HepG2 (cell line): ENCODE measurements at regions of chrX and their contacts with region 1.

Region 1: DNA sequence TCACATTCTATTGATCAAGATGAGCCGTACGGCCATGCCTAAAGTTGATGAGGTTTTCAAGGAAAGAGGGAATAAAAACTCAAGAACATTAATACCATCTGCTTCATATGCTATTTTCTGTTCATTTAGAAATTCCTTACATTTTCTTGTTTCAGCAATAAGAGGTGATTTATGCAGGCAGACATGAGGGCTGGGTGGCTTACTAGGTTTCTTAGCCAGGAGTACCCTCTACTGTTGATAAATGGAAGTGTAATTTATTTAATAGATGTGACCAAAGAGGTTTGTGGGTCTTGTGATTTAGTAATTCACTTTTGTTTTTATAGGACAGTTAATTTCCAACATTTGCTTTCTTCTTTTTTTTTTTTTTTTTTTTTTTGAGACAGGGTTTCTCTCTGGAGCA is 6.4 kb upstream of the SMIM9 start:
- DNase-seq: peak; percentile 16
- ATAC-seq: no peak
- H3K4me3 ChIP-seq: no peak overlapping the region
- H3K27ac ChIP-seq: no peak overlapping the region
- H3K4me1 ChIP-seq: no peaks in the 10 kb centered on the region
- H3K27me3 ChIP-seq: no peaks in the 10 kb centered on the region
- CTCF ChIP-seq: peak; percentile 61
- EP300 ChIP-seq: no peak
- POLR2A ChIP-seq: no peak
- RAD21 ChIP-seq: peak; percentile 41; the same call in 1 of the 2 replicates

Region 2: DNA sequence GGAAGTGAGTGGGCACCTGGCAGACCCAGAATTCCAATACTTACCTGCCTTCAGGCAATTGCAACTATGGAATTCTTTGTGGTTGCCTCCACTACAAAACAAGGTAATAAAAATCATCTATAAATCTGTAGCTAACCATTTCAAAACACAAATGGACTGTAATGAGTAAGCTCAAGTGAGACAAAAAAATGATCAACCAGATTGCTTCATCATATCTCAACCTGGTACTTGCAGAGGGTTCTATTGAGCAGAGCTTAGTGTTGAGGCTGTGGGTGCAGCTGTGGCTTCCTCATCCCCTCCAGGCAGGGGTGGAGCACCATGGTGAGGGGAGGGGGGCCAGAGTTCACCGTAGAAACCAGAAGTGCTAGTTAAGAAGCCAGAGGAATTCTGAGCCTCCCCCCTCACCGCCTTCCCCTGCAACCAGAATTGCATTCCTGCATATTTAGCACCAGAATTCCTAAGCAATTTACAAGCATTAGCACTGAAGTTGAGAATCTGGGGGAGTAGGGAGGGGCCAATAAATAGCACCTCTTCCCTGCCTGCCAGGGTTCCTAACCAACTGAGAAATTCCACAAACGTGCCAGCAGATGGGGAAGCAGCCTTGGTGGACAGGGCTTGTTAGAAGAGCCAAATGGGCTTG is 244.4 kb before region 1 on chrX:
- CTCF ChIA-PET with region 1: no interaction called
- POLR2A ChIA-PET with region 1: no interaction called
- in situ Hi-C with region 1: loop called (anchors 25 kb)
- intact Hi-C with region 1: no loop called
- DNase-seq: no peak
- ATAC-seq: no peak
- H3K4me3 ChIP-seq: no peak overlapping the region
- H3K27ac ChIP-seq: no peak overlapping the region
- H3K4me1 ChIP-seq: no peaks in the 10 kb centered on the region
- H3K27me3 ChIP-seq: 0 out of 5 replicates have a peak, but pooled peaks cover 0 to 6% of the 10 kb centered on the region in 2 experiments
- CTCF ChIP-seq: no peak
- EP300 ChIP-seq: no peak
- POLR2A ChIP-seq: no peak
- RAD21 ChIP-seq: no peak

Region 3: GRCh38 chrX:154748712-154749343 is 92.0 kb before region 1 on chrX:
- CTCF ChIA-PET with region 1: no interaction called
- POLR2A ChIA-PET with region 1: no interaction called
- in situ Hi-C with region 1: no loop called
- intact Hi-C with region 1: loop called (anchors 2 kb)
- DNase-seq: peak; percentile 32
- ATAC-seq: peak; percentile 71
- H3K4me3 ChIP-seq: no peak overlapping the region
- H3K27ac ChIP-seq: no peak overlapping the region
- H3K4me1 ChIP-seq: no peaks in the 10 kb centered on the region
- H3K27me3 ChIP-seq: peaks cover 2 to 24% of the 10 kb centered on the region in 2 experiments; a peak in 4 of 5 replicates
- CTCF ChIP-seq: peak; percentile 64
- EP300 ChIP-seq: no peak
- POLR2A ChIP-seq: no peak
- RAD21 ChIP-seq: no peak

Region 4: DNA sequence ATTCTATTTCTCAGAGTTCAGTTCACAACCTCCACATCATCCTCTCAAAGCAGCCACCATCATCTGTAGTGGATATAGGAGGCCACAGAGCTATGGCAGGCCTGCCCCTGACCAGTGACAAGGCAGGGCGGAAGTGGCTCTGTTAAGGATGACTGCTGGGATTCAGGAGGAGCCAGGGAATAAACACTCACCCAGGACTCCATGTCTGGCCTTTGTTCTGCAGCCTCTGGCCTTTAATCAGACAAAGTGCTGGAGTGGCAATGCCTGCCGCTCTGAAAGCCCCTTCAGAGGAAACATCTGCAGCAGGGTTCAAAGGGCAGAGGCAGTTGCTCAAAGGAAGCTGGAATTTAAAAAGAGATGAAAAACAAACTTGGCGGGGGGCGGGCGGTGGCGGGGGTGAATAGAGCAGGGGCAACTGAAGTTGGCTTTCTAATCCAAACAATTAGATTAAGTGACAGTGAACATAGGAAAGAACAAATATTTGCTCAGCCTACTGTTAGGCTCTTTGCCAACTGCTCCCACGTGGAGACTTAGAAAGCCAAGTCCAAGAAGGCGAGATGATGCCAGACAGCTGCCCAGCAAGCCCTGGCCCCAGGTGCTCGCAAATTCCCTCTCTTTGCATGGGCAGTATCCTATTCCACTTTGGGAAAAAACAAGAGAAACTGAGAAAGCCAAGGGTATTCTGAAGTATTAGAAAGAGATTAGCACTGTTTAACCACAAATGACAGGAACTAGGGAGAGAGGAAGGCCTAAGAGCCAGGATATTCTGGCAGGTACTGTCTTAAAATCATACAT is 41.1 kb before region 1 on chrX:
- CTCF ChIA-PET with region 1: no interaction called
- POLR2A ChIA-PET with region 1: no interaction called
- in situ Hi-C with region 1: no loop called
- intact Hi-C with region 1: no loop called
- DNase-seq: peak; percentile 90
- ATAC-seq: peak; percentile 94
- H3K4me3 ChIP-seq: peak overlapping the region in 1 of 3 experiments; percentile 43; a peak in 1 of 6 replicates
- H3K27ac ChIP-seq: peak overlapping the region; percentile 74
- H3K4me1 ChIP-seq: peaks cover 87% of the 10 kb centered on the region
- H3K27me3 ChIP-seq: no peaks in the 10 kb centered on the region
- CTCF ChIP-seq: no peak
- EP300 ChIP-seq: peak in 1 of 2 experiments; percentile 77; a peak in 2 of 4 replicates
- POLR2A ChIP-seq: no peak
- RAD21 ChIP-seq: no peak

Region 5: GRCh38 chrX:155216179-155216939 is 375.5 kb after region 1 on chrX and contains the start of gene VBP1:
- CTCF ChIA-PET with region 1: no interaction called
- POLR2A ChIA-PET with region 1: no interaction called
- in situ Hi-C with region 1: no loop called
- intact Hi-C with region 1: no loop called
- DNase-seq: peak; percentile 92
- ATAC-seq: peak; percentile 99
- H3K4me3 ChIP-seq: peak within 1 kb of the TSS; percentile 75 to 93 (median 83)
- H3K27ac ChIP-seq: peak within 1 kb of the TSS; percentile 86
- H3K4me1 ChIP-seq: peaks cover 24% of the 10 kb centered on the region
- H3K27me3 ChIP-seq: no peaks in the 10 kb centered on the region
- CTCF ChIP-seq: peak; percentile 36
- EP300 ChIP-seq: no peak
- POLR2A ChIP-seq: peak; percentile 70
- RAD21 ChIP-seq: no peak
- total RNA-seq, gene VBP1: 72.6 and 95.2 TPM in 2 replicates